ENCODE measurements at regions of chr6 and their contacts with region 1.

Region 1: GRCh38 chr6:89432875-89433251 is at the start of gene ANKRD6:
- DNase-seq: peak; percentile 57 to 90 (median 78)
- ATAC-seq: peak; percentile 94
- H3K4me3 ChIP-seq: peak within 1 kb of the TSS; percentile 73
- H3K4me3 Mint-ChIP-seq: peak within 1 kb of the TSS; percentile 98
- H3K27ac ChIP-seq: peak within 1 kb of the TSS in 1 of 2 donors; percentile 37
- H3K27ac Mint-ChIP-seq: peak within 1 kb of the TSS; percentile 73
- H3K4me1 ChIP-seq: peaks cover 15% of the 10 kb centered on the region
- H3K4me1 Mint-ChIP-seq: peaks cover 35% of the 10 kb centered on the region
- H3K27me3 ChIP-seq: no peaks in the 10 kb centered on the region
- H3K27me3 Mint-ChIP-seq: no peaks in the 10 kb centered on the region
- CTCF ChIP-seq: peak; percentile 69
- total RNA-seq, gene ANKRD6: 3.8 to 4.8 TPM

Region 2: DNA sequence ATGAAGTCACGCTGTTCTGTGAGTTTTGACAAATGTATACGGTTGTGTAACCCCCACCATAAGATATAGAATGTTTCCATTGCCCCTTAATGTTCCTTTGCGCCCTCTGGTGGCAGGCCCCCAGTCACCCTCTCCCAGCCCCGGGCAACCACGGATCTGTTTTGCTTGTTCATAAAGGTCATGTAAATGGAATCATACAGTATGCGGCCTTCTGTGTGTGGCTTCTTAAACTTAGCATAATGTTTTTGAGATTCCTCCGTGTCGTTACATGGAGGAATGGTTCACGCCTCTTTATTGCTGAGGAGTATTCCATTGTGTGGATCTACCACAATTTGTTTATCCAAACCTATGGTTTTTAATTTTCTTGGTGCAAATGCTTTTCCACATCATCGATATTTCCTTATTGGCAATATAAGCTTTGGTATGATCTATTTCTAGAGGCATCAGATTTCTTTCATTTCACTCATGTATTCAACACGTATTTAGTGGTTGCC is 177.3 kb after region 1 on chr6:
- CTCF ChIA-PET with region 1: interaction called, 7 read pairs
- POLR2A ChIA-PET with region 1: interaction called, 4 read pairs
- intact Hi-C with region 1: loop called (anchors 1 kb)
- DNase-seq: peak; percentile 67 to 87 (median 75)
- ATAC-seq: peak; percentile 77
- H3K4me3 ChIP-seq: no peak overlapping the region
- H3K4me3 Mint-ChIP-seq: no peak overlapping the region
- H3K27ac ChIP-seq: no peak overlapping the region
- H3K27ac Mint-ChIP-seq: no peak overlapping the region
- H3K4me1 ChIP-seq: no peaks in the 10 kb centered on the region
- H3K4me1 Mint-ChIP-seq: no peaks in the 10 kb centered on the region
- H3K27me3 ChIP-seq: no peaks in the 10 kb centered on the region
- H3K27me3 Mint-ChIP-seq: no peaks in the 10 kb centered on the region
- CTCF ChIP-seq: peak; percentile 86

Region 3: DNA sequence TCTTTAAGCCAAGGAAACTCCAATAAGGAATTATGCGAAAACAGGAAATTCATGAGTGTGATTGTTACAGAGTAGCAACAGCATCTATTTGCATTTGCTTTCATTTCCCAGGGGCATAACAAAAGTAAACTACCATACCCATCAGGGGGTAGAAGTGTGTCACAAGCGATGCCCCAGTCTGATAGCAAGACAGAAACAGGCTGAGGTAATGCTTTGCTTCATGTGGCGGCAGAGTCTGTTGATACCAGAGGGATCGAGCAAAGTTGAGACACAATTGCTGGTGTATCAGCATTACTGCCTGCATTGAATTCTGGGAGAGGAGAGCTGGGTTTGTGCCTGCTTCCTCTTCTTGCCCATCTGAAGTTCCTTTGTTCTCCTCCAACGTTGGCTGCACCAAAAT is 256.9 kb after region 1 on chr6:
- CTCF ChIA-PET with region 1: no interaction called
- POLR2A ChIA-PET with region 1: no interaction called
- intact Hi-C with region 1: loop called in 1 of 2 experiments (anchors 10 kb)
- DNase-seq: peak in 2 of 14 experiments; percentile 5 to 13
- ATAC-seq: no peak
- H3K4me3 ChIP-seq: no peak overlapping the region
- H3K4me3 Mint-ChIP-seq: no peak overlapping the region
- H3K27ac ChIP-seq: no peak overlapping the region
- H3K27ac Mint-ChIP-seq: no peak overlapping the region
- H3K4me1 ChIP-seq: peaks cover 4% of the 10 kb centered on the region
- H3K4me1 Mint-ChIP-seq: peaks cover 6% of the 10 kb centered on the region
- H3K27me3 ChIP-seq: no peaks in the 10 kb centered on the region
- H3K27me3 Mint-ChIP-seq: no peaks in the 10 kb centered on the region
- CTCF ChIP-seq: no peak

Region 4: DNA sequence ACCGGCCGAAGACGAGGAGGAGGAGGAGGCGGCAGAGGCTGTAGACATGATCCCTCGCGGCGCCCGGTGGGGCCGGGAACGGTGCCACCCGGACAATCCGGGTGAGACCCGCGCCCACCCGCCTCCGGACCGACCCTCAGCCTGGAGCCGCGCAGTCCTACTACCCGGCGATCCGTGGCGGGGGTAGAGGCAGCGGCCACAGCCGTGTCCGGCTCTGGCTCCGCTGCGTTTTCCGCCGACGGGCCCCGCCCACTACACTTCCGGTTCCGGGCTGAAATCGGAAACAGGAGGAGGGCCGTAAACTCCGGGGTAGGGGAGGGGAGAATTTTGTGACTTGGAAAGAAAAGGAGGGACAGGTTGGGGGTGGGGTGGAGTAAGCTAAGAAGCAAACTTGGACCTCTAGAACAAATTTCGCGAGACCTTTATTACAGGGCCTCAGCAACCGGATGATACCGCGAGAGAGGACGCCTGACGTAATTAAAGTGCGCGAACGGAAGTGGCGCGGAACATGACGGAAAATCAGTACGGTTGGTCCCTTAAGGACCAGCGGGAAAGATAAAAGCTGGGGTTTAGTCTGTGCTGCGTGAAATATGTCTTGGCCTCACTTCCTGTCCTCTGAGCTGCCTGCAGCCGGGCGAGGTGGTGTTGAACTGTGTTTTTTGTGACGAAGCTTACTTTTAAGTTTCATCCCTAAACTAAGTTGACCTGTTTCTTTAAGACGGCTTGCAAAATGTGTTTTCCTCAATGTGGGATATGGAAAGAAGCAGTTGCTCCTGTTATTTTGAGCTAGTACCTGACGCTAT is 1154.2 kb after region 1 on chr6 and contains the start of gene MAP3K7:
- CTCF ChIA-PET with region 1: no interaction called
- POLR2A ChIA-PET with region 1: no interaction called
- intact Hi-C with region 1: loop called in 1 of 2 experiments (anchors 5 kb)
- DNase-seq: peak; percentile 80 to 97 (median 92)
- ATAC-seq: peak; percentile 85
- H3K4me3 ChIP-seq: peak within 1 kb of the TSS; percentile 94
- H3K4me3 Mint-ChIP-seq: peak within 1 kb of the TSS; percentile 98
- H3K27ac ChIP-seq: peak within 1 kb of the TSS; percentile 97 to 99
- H3K27ac Mint-ChIP-seq: peak within 1 kb of the TSS; percentile 96
- H3K4me1 ChIP-seq: peaks cover 15% of the 10 kb centered on the region
- H3K4me1 Mint-ChIP-seq: peaks cover 50% of the 10 kb centered on the region
- H3K27me3 ChIP-seq: peaks cover 0 to 9% of the 10 kb centered on the region in 2 experiments
- H3K27me3 Mint-ChIP-seq: peaks cover 9% of the 10 kb centered on the region
- CTCF ChIP-seq: no peak
- total RNA-seq, gene MAP3K7: 9.0 to 9.3 TPM